GM10248 (cell line): ENCODE measurements at regions of chr4 and their contacts with region 1.

Region 1: GRCh38 chr4:46648088-46648744 is 258.3 kb upstream of the GABRA2 start:
- DNase-seq: peak; percentile 13
- CTCF ChIP-seq: peak; percentile 57

Region 2: DNA sequence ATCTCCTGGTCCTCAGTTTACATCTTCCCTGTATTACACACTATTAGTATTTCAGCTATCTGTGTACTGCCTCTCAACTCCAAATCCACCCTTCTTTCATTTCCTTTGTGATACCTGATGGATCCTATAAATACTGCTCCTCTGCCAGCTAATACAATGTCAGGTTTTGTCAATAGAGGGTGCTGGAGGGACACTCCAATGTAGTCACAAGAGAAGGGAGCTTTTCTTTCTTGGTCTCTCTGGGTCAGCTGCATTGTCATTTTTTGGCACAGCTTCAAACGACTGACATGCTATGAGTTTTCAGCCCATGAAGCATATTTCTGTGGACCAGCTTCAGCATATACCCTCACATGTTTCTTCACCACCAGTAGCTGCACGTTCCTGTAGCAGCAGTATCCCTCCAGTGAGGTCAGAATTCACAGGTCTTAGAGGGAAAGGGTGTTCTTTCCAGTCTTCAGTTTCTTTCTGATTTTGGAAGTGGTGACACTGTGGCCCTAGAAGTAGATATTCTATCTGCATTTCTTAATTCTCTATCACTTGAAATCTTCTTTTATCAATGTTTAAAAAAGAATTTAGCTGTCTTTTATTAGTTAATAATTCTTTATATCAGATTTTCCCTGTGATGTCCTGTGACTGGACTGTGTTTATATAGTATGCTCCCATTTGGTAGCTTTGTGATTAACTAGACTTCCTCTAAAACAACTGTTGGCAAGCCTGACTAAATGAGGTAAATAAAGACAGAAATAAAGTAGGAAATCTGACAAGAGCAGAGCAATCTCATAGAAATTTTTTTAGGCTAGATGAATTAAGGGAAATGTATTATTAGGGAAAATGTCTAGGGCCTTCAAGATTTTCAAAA is 318.9 kb before region 1 on chr4:
- CTCF ChIA-PET with region 1: interaction called, 24 read pairs
- POLR2A ChIA-PET with region 1: no interaction called
- DNase-seq: peak; percentile 1
- CTCF ChIP-seq: peak; percentile 50